Ovary (tissue), 10 donors: ENCODE measurements at regions of chr13 and their contacts with region 1.

Region 1: DNA sequence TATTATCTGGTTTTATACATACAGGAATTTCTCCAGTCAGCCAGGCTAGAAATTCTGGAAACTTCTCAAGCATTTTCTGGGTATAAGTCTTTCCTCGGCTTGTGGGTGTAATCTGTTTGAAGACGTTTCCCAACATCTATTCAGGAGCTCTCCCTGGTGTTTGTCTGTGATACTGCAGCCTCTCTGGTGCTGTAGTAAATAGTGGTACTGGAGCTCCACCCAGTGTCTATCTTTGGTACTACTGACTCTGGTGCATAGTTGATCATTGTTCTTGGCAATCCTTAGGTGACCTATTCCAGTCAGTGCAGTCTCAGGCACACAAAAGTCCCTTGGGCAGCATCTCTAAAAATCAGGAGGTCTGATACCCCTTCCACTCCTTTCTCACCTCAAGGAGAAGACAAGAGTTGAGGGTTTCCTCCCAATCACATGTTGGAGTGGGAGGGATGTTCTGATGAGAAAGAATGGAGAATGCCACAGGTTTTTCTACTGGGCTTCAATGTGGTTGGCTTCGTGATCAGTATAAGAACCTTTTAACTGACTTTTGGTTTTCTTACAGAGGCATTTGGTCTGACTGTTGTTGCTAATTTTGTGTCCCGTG is 115.5 kb downstream of the CYSLTR2 start:
- DNase-seq: peak; percentile 48 to 91 (median 66)
- H3K4me3 ChIP-seq: no peak overlapping the region
- H3K27ac ChIP-seq: no peak overlapping the region
- H3K4me1 ChIP-seq: no peaks in the 10 kb centered on the region
- H3K27me3 ChIP-seq: no peaks in the 10 kb centered on the region
- CTCF ChIP-seq: peak; percentile 84 to 99 (median 93)
- EP300 ChIP-seq: no peak
- POLR2A ChIP-seq: peak; percentile 44

Region 2: GRCh38 chr13:48595431-48596429 is 173.5 kb before region 1 on chr13:
- intact Hi-C with region 1: loop called (anchors 2 to 10 kb)
- DNase-seq: peak; percentile 65 to 81 (median 73)
- H3K4me3 ChIP-seq: no peak overlapping the region
- H3K27ac ChIP-seq: no peak overlapping the region
- H3K4me1 ChIP-seq: peaks cover 8% of the 10 kb centered on the region
- H3K27me3 ChIP-seq: no peaks in the 10 kb centered on the region
- CTCF ChIP-seq: peak; percentile 56 to 88 (median 74)
- EP300 ChIP-seq: no peak
- POLR2A ChIP-seq: no peak